HEK293T (cell line): ENCODE measurements at regions of chr15 and their contacts with region 1.

Region 1: GRCh38 chr15:52208306-52208946 is 17.2 kb upstream of the GNB5 start:
- DNase-seq: peak; percentile 71

Region 2: DNA sequence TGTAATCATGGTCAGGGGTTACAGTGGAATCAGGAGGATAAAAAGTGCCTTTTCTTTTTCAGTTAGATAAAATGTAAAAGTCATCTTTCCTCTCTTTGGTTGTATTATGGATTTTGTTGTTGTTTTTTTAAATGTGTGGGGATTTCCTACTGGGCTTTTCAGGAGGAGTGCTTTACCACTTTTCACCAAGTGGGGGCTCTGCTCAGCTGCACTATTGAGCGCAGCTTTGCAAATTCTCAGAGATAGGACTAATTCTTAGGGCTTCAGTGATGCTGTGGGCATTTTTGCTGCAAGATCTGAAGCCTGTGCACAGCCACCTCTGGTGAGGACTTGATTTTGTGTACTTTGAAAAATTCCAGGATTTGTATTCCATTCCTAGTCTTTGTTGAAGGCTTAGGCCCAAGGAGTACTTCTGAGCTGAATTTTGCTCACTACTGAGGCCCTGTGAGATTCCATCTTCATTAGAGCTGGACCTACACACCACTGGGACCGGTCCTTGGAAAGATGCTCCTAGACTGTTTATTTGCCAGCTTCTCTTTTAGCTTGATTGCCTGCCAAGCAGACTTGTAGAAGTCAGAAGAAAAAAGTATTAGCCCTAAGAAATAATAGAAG is 24.8 kb before region 1 on chr15:
- CTCF ChIA-PET with region 1: interaction called, 10 read pairs
- POLR2A ChIA-PET with region 1: interaction called, 4 read pairs
- DNase-seq: no peak